Posterior cingulate gyrus (tissue), 11 donors: ENCODE measurements at regions of chr5 and their contacts with region 1.

Region 1: DNA sequence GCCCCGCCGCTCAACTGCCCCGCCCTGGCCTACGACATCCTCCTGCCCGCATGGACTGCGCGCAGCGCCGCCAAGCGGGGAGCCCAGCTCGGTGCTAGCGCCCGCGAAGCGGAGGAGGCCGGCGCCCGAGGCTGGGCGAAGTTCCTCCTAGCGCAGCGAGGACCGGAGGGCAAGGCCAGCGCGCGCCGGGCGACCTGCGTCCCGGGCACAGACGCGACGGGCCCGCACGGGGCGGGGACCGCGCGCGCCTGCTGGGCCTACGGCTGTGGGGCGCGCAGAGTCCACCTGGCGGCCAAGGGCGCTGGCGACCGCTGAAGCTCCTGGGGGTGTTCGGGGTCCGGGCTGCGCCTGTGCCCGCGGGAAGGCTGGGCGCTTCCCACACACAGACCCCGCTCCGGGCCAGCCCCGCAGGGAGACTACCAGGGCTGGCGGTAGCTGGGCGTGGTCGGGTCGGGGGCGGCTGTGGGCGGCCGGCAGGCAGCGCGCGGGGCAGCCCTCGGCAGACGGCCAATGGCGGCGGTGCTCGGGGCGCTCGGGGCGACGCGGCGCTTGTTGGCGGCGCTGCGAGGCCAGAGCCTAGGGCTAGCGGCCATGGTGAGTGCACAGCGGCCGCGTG is at the start of gene PCBD2:
- DNase-seq: peak; percentile 77 to 98 (median 87)

Region 2: GRCh38 chr5:134738133-134738962 is 166.4 kb before region 1 on chr5 and contains the start of gene CAMLG:
- intact Hi-C with region 1: loop called (anchors 1 kb)
- DNase-seq: peak; percentile 95 to 100 (median 98)

Region 3: GRCh38 chr5:134758504-134759341 is 146.0 kb before region 1 on chr5 and contains the start of gene DDX46:
- intact Hi-C with region 1: loop called (anchors 1 kb)
- DNase-seq: peak; percentile 85 to 99 (median 92)

Region 4: GRCh38 chr5:134845852-134846640 is 58.7 kb before region 1 on chr5 and contains the start of gene C5orf24:
- intact Hi-C with region 1: loop called (anchors 1 kb)
- DNase-seq: peak; percentile 92 to 99 (median 95)

Region 5: DNA sequence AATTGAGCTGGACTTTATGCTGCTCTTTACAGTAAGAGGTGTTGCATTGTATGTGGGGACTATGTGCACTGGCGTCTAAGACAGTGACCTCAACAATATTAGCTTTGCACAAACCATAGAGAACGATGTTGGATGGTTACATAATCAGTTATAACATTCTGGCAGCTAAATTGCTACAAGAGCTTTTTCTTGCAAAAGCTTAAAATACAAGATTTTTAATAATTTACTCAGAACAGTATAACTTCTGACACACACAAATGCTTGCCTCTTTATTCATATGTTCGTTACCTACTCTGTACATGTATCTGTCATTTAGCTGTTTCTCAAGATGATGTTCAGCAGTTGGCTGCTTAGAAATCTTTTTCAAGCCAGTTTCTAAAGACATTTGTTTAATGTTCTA is 47.3 kb before region 1 on chr5:
- intact Hi-C with region 1: no loop called
- DNase-seq: no peak

Region 6: DNA sequence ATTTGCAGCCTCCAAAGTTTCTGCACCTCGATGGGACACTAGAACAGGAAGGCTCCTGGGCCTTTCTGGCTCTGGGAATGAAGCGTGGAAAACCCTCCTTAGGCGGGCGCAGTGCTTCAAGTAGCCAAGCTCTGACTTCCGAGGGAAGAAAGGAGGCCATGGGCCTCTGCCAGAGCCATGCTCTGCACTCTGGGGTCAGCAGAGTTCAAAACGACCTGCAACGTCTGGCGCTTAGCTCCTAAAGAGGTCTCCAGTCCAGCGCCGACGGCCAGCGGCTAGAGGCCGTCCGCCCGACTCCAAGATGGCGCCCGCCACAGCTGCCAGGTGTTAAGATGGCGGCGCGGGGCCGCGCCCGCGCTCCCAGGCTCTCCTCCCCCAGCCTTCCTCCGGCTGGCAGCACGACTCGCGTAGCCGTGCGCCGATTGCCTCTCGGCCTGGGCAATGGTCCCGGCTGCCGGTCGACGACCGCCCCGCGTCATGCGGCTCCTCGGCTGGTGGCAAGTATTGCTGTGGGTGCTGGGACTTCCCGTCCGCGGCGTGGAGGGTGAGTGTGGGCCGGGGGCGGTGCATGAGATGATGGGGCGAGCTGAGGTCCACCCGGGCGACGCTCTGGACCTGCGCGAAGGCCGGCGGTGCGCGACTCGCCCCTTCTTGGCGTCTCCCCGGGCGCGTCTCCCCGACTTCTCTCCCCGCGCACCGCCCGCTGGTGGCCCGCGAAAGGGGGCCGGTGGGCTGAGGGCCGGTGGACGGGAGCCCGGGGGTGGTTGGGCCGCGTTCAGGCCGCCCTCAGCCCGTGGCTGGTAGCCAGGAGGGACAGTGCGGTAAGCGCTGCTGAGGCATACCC is 30.5 kb before region 1 on chr5 and contains the start of gene TXNDC15:
- intact Hi-C with region 1: loop called (anchors 1 kb)
- DNase-seq: peak; percentile 78 to 98 (median 82)

Region 7: DNA sequence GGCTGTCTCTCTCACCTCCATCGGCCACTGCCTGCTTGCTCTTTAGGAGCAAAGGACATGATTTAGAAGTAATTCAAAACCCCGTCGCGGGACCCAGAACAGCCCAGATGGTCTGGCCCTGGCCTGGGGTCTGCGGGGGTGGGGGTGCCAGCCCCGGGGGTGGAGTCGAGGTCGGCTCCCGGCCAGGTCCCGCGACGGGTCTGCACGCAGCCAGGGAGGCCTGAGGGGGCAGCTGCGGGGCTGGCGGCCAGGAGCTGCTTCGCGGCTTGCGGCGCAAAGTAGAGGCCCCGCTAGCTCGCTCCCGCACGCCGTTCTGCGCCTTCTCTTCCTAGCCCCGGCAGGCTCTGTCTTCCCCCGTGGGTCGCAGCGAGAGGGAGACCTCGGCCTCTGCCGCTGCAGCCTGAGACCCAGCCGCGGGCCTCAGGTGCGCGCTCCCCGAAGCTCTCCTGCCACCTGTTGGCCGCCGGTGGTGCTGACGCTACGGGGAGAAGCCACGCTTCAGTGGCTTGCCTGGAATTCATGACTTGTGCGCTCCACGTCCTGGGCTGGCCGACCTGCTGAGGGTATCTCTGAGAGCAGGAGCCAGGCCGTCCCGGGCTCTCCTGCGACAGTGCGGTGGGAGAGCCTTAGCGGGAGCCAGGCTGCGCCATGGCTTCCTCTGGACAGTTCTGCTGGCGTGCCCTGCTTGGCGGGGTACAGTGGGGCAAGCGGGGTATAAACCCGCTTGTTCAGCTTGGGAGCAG is 286.5 kb after region 1 on chr5:
- intact Hi-C with region 1: loop called (anchors 10 kb)
- DNase-seq: peak; percentile 41 to 95 (median 66)

Region 8: GRCh38 chr5:135242021-135242865 is 337.5 kb after region 1 on chr5:
- intact Hi-C with region 1: no loop called
- DNase-seq: peak in 2 of 10 donors; percentile 24 to 26